ENCODE measurements at regions of chr17 and their contacts with region 1.

Region 1: DNA sequence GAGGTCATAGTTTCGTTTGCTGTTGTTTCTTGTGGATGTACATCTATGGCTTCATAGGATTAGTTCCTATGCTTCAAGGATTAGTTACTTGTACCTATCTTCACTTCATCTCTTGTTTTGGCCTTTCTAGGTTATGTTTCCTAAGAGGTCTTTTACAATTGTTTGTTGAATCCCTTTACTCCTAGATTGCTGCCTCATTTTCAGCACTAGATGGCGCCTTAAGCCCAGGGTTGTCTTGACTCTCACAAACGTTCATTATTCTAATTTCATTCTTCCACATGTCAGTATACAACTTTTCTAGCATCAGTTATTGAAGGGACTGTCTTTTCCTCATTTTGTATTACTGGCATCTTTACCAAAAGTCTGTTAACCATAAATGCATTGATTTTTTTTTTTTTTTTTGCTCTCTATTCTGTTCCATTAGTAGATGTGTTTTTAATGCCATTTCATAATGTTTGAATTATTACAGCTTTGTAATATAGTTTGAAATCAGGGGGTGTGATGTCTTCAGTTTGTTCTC is 45.0 kb upstream of the NACA2 start:
- DNase-seq: peak; percentile 88
- H3K4me3 Mint-ChIP-seq: no peak overlapping the region
- H3K27ac Mint-ChIP-seq: no peak overlapping the region
- H3K4me1 Mint-ChIP-seq: no peaks in the 10 kb centered on the region
- H3K27me3 Mint-ChIP-seq: peaks cover 60% of the 10 kb centered on the region

Region 2: DNA sequence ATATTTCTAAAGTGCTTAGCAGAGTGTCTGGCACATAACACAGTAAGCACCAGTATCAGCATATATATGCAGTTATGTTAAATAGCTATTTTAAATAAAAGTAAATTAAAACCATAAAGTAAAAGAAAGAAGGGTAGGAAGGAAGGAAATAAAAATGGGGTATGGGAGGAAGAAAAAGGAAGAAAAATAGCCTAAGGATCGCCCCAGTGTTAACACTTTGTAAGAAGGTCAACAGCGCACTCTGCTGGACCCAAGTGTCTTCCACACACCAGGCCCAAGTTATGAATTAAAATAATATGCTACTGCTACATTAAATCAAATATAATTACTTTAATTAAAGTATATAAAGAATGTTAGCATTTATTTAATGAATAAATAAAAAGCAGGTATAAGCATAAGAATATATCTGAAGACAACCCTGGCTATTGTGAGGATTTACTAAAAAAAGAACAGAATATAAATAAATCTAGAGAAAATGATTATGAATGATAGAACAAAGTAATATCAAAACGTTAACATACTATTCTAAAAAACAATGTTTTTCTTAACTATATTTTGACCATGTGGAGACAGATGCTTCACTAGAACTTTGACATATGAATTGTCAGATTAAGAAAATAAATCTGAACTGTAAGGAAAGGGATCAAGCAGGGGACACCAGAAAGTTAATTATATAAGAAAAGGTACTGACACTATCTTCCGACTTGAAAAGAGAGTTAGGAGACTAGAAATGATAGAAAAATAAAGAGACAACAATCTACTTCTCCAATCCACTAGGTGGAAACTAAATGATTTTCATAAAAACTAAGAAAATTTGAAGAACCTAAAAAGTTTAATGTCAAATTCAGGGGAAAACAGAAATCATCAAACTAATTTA is 201.4 kb after region 1 on chr17:
- intact Hi-C with region 1: loop called (anchors 1 kb)
- DNase-seq: peak; percentile 83
- H3K4me3 Mint-ChIP-seq: no peak overlapping the region
- H3K27ac Mint-ChIP-seq: no peak overlapping the region
- H3K4me1 Mint-ChIP-seq: peaks cover 2% of the 10 kb centered on the region
- H3K27me3 Mint-ChIP-seq: no peaks in the 10 kb centered on the region

Region 3: GRCh38 chr17:62065598-62066468 is 429.9 kb after region 1 on chr17:
- intact Hi-C with region 1: loop called (anchors 1 kb)
- DNase-seq: peak; percentile 99
- H3K4me3 Mint-ChIP-seq: peak overlapping the region; percentile 97
- H3K27ac Mint-ChIP-seq: peak overlapping the region; percentile 99
- H3K4me1 Mint-ChIP-seq: peaks cover 29% of the 10 kb centered on the region
- H3K27me3 Mint-ChIP-seq: no peaks in the 10 kb centered on the region

Region 4: GRCh38 chr17:62109378-62109902 is 473.5 kb after region 1 on chr17:
- intact Hi-C with region 1: loop called (anchors 2 kb)
- DNase-seq: peak; percentile 86
- H3K4me3 Mint-ChIP-seq: no peak overlapping the region
- H3K27ac Mint-ChIP-seq: no peak overlapping the region
- H3K4me1 Mint-ChIP-seq: no peaks in the 10 kb centered on the region
- H3K27me3 Mint-ChIP-seq: peaks cover 10% of the 10 kb centered on the region

Measured in activated CD4-positive, alpha-beta T cell treated with anti-CD3 and anti-CD28 coated beads, Interleukin-2, amount 10 ng/mL, durations not matched to agents 24 days and 14 days (primary cell).